ENCODE measurements at regions of chr1 and their contacts with region 1.

Region 1: GRCh38 chr1:4718071-4718470 is 63.7 kb downstream of the AJAP1 start:
- DNase-seq: no peak
- H3K4me3 ChIP-seq: no peak overlapping the region
- H3K27ac ChIP-seq: no peak overlapping the region
- H3K4me1 ChIP-seq: no peaks in the 10 kb centered on the region
- H3K27me3 ChIP-seq: no peaks in the 10 kb centered on the region
- CTCF ChIP-seq: no peak

Region 2: DNA sequence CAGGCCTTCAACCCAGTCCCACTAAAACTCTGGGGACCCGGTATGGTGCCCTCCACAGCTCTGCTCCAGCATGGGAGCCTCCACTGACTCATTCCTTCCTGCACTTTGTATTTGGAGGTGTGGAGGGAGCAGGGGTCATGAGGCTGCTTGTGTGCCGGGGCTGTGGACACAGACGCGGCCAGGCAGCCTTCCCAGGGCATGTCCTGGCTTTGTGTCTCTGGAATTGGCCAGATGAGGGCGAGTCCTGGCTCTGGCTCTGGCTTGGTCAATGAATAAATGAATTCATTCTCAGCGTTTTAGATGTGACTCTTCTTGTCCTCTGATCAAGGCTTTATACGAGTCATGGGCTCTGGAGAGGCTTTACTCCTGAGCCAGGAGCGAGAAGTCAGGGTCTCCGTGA is 44.6 kb before region 1 on chr1:
- CTCF ChIA-PET with region 1: no interaction called
- dilution Hi-C with region 1: loop called (anchors 5 kb)
- in situ Hi-C with region 1: no loop called
- intact Hi-C with region 1: no loop called
- DNase-seq: no peak
- H3K4me3 ChIP-seq: no peak overlapping the region
- H3K27ac ChIP-seq: no peak overlapping the region
- H3K4me1 ChIP-seq: peaks cover 8% of the 10 kb centered on the region
- H3K27me3 ChIP-seq: no peaks in the 10 kb centered on the region
- CTCF ChIP-seq: no peak

Measured in mammary epithelial cell (primary cell).